Activated T-helper 1 cell treated with anti-CD3 and anti-CD28 coated beads, Interleukin-12 subunit alpha, Interleukin-12 subunit beta, Interleukin-2, Interleukin-4 antibody, amounts not matched to agents 30 ng/mL and 10 ng/mL and 1 ng/mL, durations not matched to agents 14 hours and 24 hours and 36 hours (primary cell): ENCODE measurements at regions of chr14 and their contacts with region 1.

Region 1: GRCh38 chr14:20682435-20683124 is 1.8 kb upstream of the RNASE4 start:
- DNase-seq: peak; percentile 65
- H3K4me3 Mint-ChIP-seq: no peak overlapping the region
- H3K27ac Mint-ChIP-seq: no peak overlapping the region
- H3K4me1 Mint-ChIP-seq: peaks cover 10% of the 10 kb centered on the region
- H3K27me3 Mint-ChIP-seq: no peaks in the 10 kb centered on the region

Region 2: GRCh38 chr14:20343092-20343861 is 339.3 kb before region 1 on chr14 and contains the start of gene PARP2:
- intact Hi-C with region 1: loop called (anchors 1 kb)
- DNase-seq: peak; percentile 92
- H3K4me3 Mint-ChIP-seq: peak within 1 kb of the TSS; percentile 95
- H3K27ac Mint-ChIP-seq: peak within 1 kb of the TSS; percentile 96
- H3K4me1 Mint-ChIP-seq: peaks cover 19% of the 10 kb centered on the region
- H3K27me3 Mint-ChIP-seq: peaks cover 6% of the 10 kb centered on the region
- total RNA-seq, gene PARP2: 32.5 and 36.6 TPM in 2 replicates

Region 3: GRCh38 chr14:20413045-20413799 is 269.4 kb before region 1 on chr14 and contains the start of gene TEP1:
- intact Hi-C with region 1: loop called (anchors 1 kb)
- DNase-seq: peak; percentile 69
- H3K4me3 Mint-ChIP-seq: peak within 1 kb of the TSS; percentile 100
- H3K27ac Mint-ChIP-seq: peak within 1 kb of the TSS; percentile 99
- H3K4me1 Mint-ChIP-seq: peaks cover 40% of the 10 kb centered on the region
- H3K27me3 Mint-ChIP-seq: no peaks in the 10 kb centered on the region
- total RNA-seq, gene TEP1: 39.3 and 41.9 TPM in 2 replicates

Region 4: GRCh38 chr14:20461274-20462001 is 221.1 kb before region 1 on chr14 and contains the start of gene PIP4P1:
- intact Hi-C with region 1: loop called (anchors 1 kb)
- DNase-seq: peak; percentile 99
- H3K4me3 Mint-ChIP-seq: peak within 1 kb of the TSS; percentile 94
- H3K27ac Mint-ChIP-seq: peak within 1 kb of the TSS; percentile 87
- H3K4me1 Mint-ChIP-seq: peaks cover 23% of the 10 kb centered on the region
- H3K27me3 Mint-ChIP-seq: no peaks in the 10 kb centered on the region
- total RNA-seq, gene PIP4P1: 36.6 and 37.0 TPM in 2 replicates

Region 5: GRCh38 chr14:20556500-20557211 is 125.9 kb before region 1 on chr14:
- intact Hi-C with region 1: no loop called
- DNase-seq: no peak
- H3K4me3 Mint-ChIP-seq: no peak overlapping the region
- H3K27ac Mint-ChIP-seq: no peak overlapping the region
- H3K4me1 Mint-ChIP-seq: no peaks in the 10 kb centered on the region
- H3K27me3 Mint-ChIP-seq: peaks cover 2% of the 10 kb centered on the region

Region 6: GRCh38 chr14:20632682-20633428 is 49.7 kb before region 1 on chr14:
- intact Hi-C with region 1: loop called (anchors 1 kb)
- DNase-seq: peak; percentile 53
- H3K4me3 Mint-ChIP-seq: peak overlapping the region; percentile 85
- H3K27ac Mint-ChIP-seq: peak overlapping the region; percentile 91
- H3K4me1 Mint-ChIP-seq: peaks cover 56% of the 10 kb centered on the region
- H3K27me3 Mint-ChIP-seq: peaks cover 76% of the 10 kb centered on the region

Region 7: GRCh38 chr14:20662968-20663732 is 19.4 kb before region 1 on chr14:
- intact Hi-C with region 1: loop called (anchors 1 kb)
- DNase-seq: peak; percentile 69
- H3K4me3 Mint-ChIP-seq: peak overlapping the region; percentile 82
- H3K27ac Mint-ChIP-seq: peak overlapping the region; percentile 28
- H3K4me1 Mint-ChIP-seq: peaks cover 38% of the 10 kb centered on the region
- H3K27me3 Mint-ChIP-seq: peaks cover 11% of the 10 kb centered on the region

Region 8: GRCh38 chr14:20697273-20698017 is 14.9 kb after region 1 on chr14:
- intact Hi-C with region 1: no loop called
- DNase-seq: peak; percentile 44
- H3K4me3 Mint-ChIP-seq: no peak overlapping the region
- H3K27ac Mint-ChIP-seq: no peak overlapping the region
- H3K4me1 Mint-ChIP-seq: no peaks in the 10 kb centered on the region
- H3K27me3 Mint-ChIP-seq: peaks cover 8% of the 10 kb centered on the region

Region 9: DNA sequence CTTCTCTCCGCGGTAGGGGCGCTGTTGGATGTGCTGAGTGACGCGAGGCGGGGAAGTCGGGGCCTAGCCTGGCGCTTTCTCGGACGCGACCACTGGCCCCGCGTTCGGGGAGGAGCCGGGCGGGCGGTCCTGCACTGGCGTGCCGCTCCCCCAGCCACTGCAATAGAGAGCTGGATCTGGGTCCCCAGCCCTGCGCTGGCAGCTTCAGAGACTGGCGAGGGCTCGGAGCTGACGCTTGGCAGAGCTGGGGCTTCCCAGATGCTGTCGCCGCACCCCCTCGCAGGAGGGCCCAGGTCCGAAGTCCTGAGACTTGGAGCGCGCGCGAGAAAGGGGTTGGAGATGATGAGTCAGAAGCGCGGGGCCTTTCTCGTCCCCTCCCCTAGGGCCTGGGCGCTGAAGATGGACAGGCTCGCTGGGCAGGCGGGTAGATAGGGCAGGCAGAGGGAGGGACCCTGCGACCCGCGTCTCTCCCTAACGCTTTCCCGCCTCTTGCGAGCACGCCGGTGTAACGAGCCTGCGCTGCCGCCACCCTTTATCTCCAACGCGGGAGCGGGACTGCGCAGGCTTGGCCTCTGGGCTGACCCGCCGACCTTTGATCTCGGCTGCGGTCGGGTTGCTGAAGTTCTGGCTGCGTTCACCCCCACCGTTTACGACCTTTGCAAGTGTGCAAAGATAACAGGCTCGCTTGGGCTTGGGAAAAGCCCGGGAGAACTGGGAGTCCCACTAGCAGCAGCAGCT is 421.3 kb after region 1 on chr14:
- intact Hi-C with region 1: loop called (anchors 5 kb)
- DNase-seq: peak; percentile 92
- H3K4me3 Mint-ChIP-seq: peak overlapping the region; percentile 93
- H3K27ac Mint-ChIP-seq: peak overlapping the region; percentile 97
- H3K4me1 Mint-ChIP-seq: peaks cover 56% of the 10 kb centered on the region
- H3K27me3 Mint-ChIP-seq: peaks cover 6% of the 10 kb centered on the region